MCF 10A (cell line): ENCODE measurements at regions of chr9 and their contacts with region 1.

Region 1: GRCh38 chr9:136093995-136094881 is 851 bp downstream of the NACC2 start:
- DNase-seq: peak; percentile 65
- H3K4me3 Mint-ChIP-seq: peak overlapping the region; percentile 77
- H3K27ac Mint-ChIP-seq: peak overlapping the region; percentile 67
- H3K4me1 Mint-ChIP-seq: peaks cover 17% of the 10 kb centered on the region
- H3K27me3 Mint-ChIP-seq: no peaks in the 10 kb centered on the region
- CTCF ChIP-seq: no peak

Region 2: DNA sequence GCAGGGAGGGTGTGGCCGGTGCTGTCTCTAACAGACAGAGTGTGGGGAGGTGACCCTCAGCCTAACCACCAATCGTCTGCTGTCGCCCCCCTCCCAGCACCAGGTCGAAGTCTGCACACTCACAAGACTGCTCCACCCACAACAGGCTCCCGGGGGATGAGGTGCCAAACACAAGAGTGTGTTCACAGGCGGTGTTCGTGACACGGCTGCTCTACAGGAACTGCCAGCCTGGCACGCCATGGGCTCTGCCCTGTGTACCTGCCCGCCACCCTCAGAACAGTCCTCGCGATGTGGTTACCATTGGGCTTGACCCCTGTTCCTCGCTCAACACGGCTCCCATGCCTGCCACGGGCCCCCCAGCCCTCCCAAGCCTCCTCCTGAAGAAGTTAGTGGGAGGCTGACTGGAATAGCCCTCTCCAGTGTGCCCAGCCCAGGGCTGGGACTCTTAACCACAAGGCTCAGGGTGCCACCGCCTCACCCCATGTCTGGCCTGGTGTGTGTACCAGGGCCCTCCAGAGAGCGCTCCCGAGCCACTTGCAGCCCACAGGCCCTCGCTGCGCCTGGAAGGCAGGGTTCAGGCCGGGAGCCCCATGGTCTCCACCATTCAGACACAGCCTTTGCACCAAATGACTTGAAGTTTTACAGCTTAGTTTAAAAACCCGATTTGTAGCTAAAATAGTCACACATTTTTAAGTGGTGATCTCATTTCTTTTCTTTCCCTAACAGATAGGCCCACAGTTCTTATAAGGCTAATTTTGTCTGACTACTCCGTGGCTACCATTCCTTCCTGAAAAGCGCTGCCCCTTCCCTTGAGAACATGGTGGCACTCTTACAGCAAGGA is 289.4 kb before region 1 on chr9:
- CTCF ChIA-PET with region 1: no interaction called
- POLR2A ChIA-PET with region 1: no interaction called
- intact Hi-C with region 1: no loop called
- DNase-seq: no peak
- H3K4me3 Mint-ChIP-seq: no peak overlapping the region
- H3K27ac Mint-ChIP-seq: no peak overlapping the region
- H3K4me1 Mint-ChIP-seq: no peaks in the 10 kb centered on the region
- H3K27me3 Mint-ChIP-seq: no peaks in the 10 kb centered on the region
- CTCF ChIP-seq: no peak

Region 3: GRCh38 chr9:136051517-136052432 is 42.5 kb before region 1 on chr9:
- CTCF ChIA-PET with region 1: no interaction called
- POLR2A ChIA-PET with region 1: interaction called, 10 read pairs
- intact Hi-C with region 1: no loop called
- DNase-seq: peak; percentile 97
- H3K4me3 Mint-ChIP-seq: peak overlapping the region; percentile 64
- H3K27ac Mint-ChIP-seq: peak overlapping the region; percentile 35
- H3K4me1 Mint-ChIP-seq: peaks cover 6% of the 10 kb centered on the region
- H3K27me3 Mint-ChIP-seq: no peaks in the 10 kb centered on the region
- CTCF ChIP-seq: no peak

Region 4: DNA sequence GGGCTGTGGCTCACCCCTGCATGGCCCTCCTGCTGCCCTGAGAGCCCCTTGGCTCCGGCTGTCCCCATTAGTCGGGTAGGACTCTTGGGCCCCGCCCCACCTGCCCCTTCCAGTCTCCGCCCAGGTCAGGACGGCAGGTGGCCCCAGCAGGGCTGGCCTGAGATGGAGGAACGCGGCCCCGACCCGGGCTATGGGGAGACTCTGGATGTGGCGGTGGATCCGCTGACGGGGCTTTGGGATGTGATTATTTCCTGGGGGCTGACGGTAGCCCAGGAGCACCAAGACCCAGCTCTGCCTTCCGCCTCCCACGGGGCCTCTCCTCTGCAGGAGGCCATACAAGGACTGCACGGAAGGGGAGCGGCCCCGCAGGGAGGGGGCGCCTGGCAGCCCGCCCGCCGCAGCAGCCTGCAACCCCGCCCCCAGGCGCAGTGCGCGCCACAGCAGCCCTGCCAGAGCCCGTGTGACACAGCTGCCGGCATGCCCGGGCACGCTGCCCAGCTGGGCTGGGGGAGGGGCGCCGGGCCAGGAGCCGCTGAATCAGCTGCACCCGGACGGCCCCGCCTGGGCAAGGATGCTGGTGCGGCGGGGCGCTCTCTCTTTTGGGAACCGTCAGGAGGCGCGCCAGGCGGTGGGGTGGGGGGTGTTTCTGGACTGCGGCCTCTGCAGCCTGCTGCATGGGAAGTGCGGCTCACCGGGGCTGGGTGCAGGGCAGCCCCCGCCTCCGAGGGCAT is 15.3 kb after region 1 on chr9:
- CTCF ChIA-PET with region 1: interaction called, 6 read pairs
- POLR2A ChIA-PET with region 1: interaction called, 65 read pairs
- intact Hi-C with region 1: no loop called
- DNase-seq: peak; percentile 91
- H3K4me3 Mint-ChIP-seq: peak overlapping the region; percentile 67
- H3K27ac Mint-ChIP-seq: no peak overlapping the region
- H3K4me1 Mint-ChIP-seq: peaks cover 24% of the 10 kb centered on the region
- H3K27me3 Mint-ChIP-seq: no peaks in the 10 kb centered on the region
- CTCF ChIP-seq: peak; percentile 11

Region 5: DNA sequence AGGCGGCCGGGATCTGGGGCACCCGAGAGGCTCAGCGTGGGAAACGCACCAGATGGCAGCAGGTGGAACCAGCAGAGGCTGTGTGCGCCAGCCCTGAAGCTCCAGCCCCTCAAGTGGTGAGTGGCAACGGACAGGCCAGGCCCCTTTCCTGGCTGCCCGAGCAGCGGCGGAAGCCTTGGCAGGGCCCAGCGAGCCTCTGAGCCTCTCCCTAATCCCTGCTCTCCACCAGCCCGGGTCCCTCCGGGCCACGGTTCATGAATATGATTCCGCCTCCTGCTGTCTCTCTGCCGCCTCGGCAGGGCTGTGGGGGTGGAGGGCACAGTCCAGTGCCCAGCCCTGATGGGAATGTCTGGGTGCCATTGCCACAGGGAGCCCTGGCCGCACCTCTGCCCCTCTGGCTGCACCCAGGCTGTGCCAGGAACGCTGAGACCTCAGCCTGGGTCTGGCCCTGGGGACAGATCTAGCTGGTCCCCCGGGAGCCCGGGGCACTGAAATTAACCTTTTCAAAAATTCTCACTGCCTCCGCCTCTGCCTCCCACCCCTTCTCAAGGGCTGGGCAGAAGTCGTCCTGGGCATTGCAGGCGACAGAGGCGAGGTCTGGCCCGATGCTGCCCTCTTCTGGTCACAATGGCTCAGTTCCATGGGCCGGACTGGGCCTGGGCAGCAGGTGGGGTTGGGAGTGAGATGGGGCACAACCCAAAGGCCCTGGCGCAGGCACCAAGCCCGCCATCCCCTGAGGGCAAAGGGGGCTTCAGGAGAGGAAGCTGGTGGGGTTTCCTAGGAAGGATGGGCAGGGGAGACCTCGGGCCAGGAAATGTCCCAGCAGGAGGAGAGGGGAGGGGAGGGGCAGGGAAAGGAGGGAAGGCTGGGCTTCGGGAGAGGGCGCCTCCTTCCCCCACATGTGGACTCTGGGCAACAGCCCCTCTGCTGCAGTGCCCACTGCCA is 189.3 kb after region 1 on chr9:
- CTCF ChIA-PET with region 1: no interaction called
- POLR2A ChIA-PET with region 1: no interaction called
- intact Hi-C with region 1: no loop called
- DNase-seq: peak; percentile 68
- H3K4me3 Mint-ChIP-seq: no peak overlapping the region
- H3K27ac Mint-ChIP-seq: no peak overlapping the region
- H3K4me1 Mint-ChIP-seq: no peaks in the 10 kb centered on the region
- H3K27me3 Mint-ChIP-seq: peaks cover 20% of the 10 kb centered on the region
- CTCF ChIP-seq: peak; percentile 76